GM12878 (cell line): ENCODE measurements at regions of chr22 and their contacts with region 1.

Region 1: GRCh38 chr22:41204992-41205900 is at the start of gene L3MBTL2:
- DNase-seq: peak; percentile 88
- ATAC-seq: peak; percentile 100
- H3K4me3 ChIP-seq: peak within 1 kb of the TSS; percentile 93
- H3K27ac ChIP-seq: peak within 1 kb of the TSS; percentile 93
- H3K4me1 ChIP-seq: no peaks in the 10 kb centered on the region
- H3K27me3 ChIP-seq: no peaks in the 10 kb centered on the region
- CTCF ChIP-seq: peak in 1 of 3 experiments; percentile 18; a peak in 1 of 6 replicates
- EP300 ChIP-seq: no peak
- POLR2A ChIP-seq: peak; percentile 88
- RAD21 ChIP-seq: no peak
- polyA plus RNA-seq, gene L3MBTL2: 13.2 to 17.6 TPM

Region 2: DNA sequence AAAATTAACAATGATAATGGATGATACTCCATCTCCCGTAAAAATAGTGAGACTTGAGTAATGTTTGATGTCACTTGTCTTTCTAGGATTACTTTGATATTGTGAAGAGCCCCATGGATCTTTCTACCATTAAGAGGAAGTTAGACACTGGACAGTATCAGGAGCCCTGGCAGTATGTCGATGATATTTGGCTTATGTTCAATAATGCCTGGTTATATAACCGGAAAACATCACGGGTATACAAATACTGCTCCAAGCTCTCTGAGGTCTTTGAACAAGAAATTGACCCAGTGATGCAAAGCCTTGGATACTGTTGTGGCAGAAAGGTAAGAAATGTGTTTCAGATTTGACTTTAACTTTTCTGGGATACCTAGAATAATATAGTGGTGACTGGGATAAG is 48.2 kb before region 1 on chr22:
- CTCF ChIA-PET with region 1: no interaction called
- POLR2A ChIA-PET with region 1: interaction called, 13 read pairs
- RAD21 ChIA-PET with region 1: no interaction called
- SMC1A ChIA-PET with region 1: no interaction called
- in situ Hi-C with region 1: no loop called
- intact Hi-C with region 1: no loop called
- DNase-seq: no peak
- ATAC-seq: no peak
- H3K4me3 ChIP-seq: no peak overlapping the region
- H3K27ac ChIP-seq: no peak overlapping the region
- H3K4me1 ChIP-seq: no peaks in the 10 kb centered on the region
- H3K27me3 ChIP-seq: no peaks in the 10 kb centered on the region
- CTCF ChIP-seq: no peak
- EP300 ChIP-seq: no peak
- POLR2A ChIP-seq: no peak
- RAD21 ChIP-seq: no peak

Region 3: GRCh38 chr22:41217553-41218157 is 12.4 kb after region 1 on chr22:
- CTCF ChIA-PET with region 1: interaction called, 3 read pairs
- POLR2A ChIA-PET with region 1: interaction called, 11 read pairs
- RAD21 ChIA-PET with region 1: interaction called, 4 read pairs
- SMC1A ChIA-PET with region 1: no interaction called
- in situ Hi-C with region 1: no loop called
- intact Hi-C with region 1: no loop called
- DNase-seq: no peak
- ATAC-seq: peak; percentile 97
- H3K4me3 ChIP-seq: peak overlapping the region; percentile 5; the same call in 1 of the 2 replicates
- H3K27ac ChIP-seq: peak overlapping the region; percentile 56
- H3K4me1 ChIP-seq: peaks cover 12% of the 10 kb centered on the region
- H3K27me3 ChIP-seq: no peaks in the 10 kb centered on the region
- CTCF ChIP-seq: no peak
- EP300 ChIP-seq: no peak
- POLR2A ChIP-seq: no peak
- RAD21 ChIP-seq: no peak